ENCODE measurements at regions of chr12 and their contacts with region 1.

Region 1: GRCh38 chr12:66279123-66279712 is 23.1 kb upstream of the HELB start:
- DNase-seq: peak in 8 of 9 experiments; percentile 18 to 73 (median 45)
- ATAC-seq: peak; percentile 70
- H3K4me3 ChIP-seq: no peak overlapping the region
- H3K4me3 Mint-ChIP-seq: peak overlapping the region; percentile 12
- H3K27ac ChIP-seq: no peak overlapping the region
- H3K27ac Mint-ChIP-seq: no peak overlapping the region
- H3K4me1 ChIP-seq: peaks cover 24% of the 10 kb centered on the region
- H3K4me1 Mint-ChIP-seq: peaks cover 47% of the 10 kb centered on the region
- H3K27me3 ChIP-seq: no peaks in the 10 kb centered on the region
- H3K27me3 Mint-ChIP-seq: no peaks in the 10 kb centered on the region
- CTCF ChIP-seq: peak; percentile 63

Region 2: DNA sequence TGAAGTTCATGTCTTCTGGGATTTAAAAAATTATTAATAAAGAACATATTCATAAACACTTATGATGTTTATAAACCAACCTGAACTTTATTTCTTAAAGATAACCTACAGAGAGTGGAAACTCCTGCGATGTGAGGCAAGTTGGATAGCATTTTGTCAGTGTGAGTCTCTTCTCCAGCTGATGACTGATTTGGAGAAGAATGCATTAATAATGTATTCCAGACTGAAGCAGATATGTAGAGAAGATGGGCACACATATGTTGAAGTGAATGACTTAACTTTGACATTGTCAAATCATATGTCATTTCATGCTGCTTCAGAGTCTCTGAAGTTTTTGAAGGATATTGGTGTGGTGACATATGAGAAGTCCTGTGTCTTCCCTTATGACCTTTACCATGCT is 30.4 kb after region 1 on chr12:
- CTCF ChIA-PET with region 1: interaction called, 8 read pairs
- POLR2A ChIA-PET with region 1: interaction called, 3 read pairs
- intact Hi-C with region 1: loop called in 1 of 2 experiments (anchors 5 kb)
- DNase-seq: no peak
- ATAC-seq: no peak
- H3K4me3 ChIP-seq: no peak overlapping the region
- H3K4me3 Mint-ChIP-seq: no peak overlapping the region
- H3K27ac ChIP-seq: no peak overlapping the region
- H3K27ac Mint-ChIP-seq: peak overlapping the region; percentile 38
- H3K4me1 ChIP-seq: peaks cover 62% of the 10 kb centered on the region
- H3K4me1 Mint-ChIP-seq: peaks cover 86% of the 10 kb centered on the region
- H3K27me3 ChIP-seq: no peaks in the 10 kb centered on the region
- H3K27me3 Mint-ChIP-seq: no peaks in the 10 kb centered on the region
- CTCF ChIP-seq: no peak

Region 3: GRCh38 chr12:66319266-66319954 is 40.2 kb after region 1 on chr12:
- CTCF ChIA-PET with region 1: interaction called, 8 read pairs
- POLR2A ChIA-PET with region 1: interaction called, 5 read pairs
- intact Hi-C with region 1: loop called (anchors 2 to 5 kb)
- DNase-seq: no peak
- ATAC-seq: no peak
- H3K4me3 ChIP-seq: no peak overlapping the region
- H3K4me3 Mint-ChIP-seq: no peak overlapping the region
- H3K27ac ChIP-seq: no peak overlapping the region
- H3K27ac Mint-ChIP-seq: peak overlapping the region; percentile 49
- H3K4me1 ChIP-seq: peaks cover 15% of the 10 kb centered on the region
- H3K4me1 Mint-ChIP-seq: peaks cover 69% of the 10 kb centered on the region
- H3K27me3 ChIP-seq: no peaks in the 10 kb centered on the region
- H3K27me3 Mint-ChIP-seq: no peaks in the 10 kb centered on the region
- CTCF ChIP-seq: no peak

Region 4: DNA sequence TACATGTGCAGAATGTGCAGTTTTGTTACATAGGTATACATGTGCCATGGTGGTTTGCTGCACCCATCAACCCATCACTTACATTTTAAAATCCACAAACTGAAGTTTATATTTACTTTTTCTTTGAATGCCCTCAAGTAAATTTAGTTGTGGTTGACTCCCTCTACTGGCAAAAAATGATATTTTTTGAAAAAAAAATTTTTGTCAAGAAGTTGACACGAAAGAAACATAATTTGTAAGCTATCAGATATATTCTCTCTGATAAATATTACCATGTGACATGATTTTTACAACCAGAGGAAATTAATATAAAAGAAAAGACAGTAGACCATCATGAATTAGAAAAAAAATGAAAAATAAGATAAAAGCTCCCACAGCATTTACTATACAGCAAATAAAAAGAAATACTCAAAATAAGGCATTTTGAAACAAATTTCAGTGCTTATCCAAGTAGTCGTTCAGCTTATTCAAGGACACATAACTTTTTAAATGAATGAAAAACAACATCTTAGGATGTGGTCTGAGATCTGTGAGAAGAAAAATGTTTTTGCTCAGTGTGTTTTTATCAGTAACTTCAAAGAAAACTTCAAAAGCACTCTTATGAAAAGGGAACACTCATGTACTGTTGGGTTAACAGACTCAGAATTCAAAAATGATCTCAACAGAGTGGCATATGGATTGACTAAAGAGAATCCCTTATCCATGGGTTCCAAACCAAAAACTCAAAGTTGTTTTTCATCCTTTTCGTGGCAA is 429.7 kb after region 1 on chr12:
- CTCF ChIA-PET with region 1: no interaction called
- POLR2A ChIA-PET with region 1: no interaction called
- intact Hi-C with region 1: loop called in 1 of 2 experiments (anchors 5 kb)
- DNase-seq: peak in 2 of 9 experiments; percentile 26 to 63
- ATAC-seq: peak; percentile 86
- H3K4me3 ChIP-seq: no peak overlapping the region
- H3K4me3 Mint-ChIP-seq: peak overlapping the region; percentile 46
- H3K27ac ChIP-seq: peak overlapping the region; percentile 24 to 41
- H3K27ac Mint-ChIP-seq: peak overlapping the region; percentile 78
- H3K4me1 ChIP-seq: peaks cover 37% of the 10 kb centered on the region
- H3K4me1 Mint-ChIP-seq: peaks cover 48% of the 10 kb centered on the region
- H3K27me3 ChIP-seq: no peaks in the 10 kb centered on the region
- H3K27me3 Mint-ChIP-seq: no peaks in the 10 kb centered on the region
- CTCF ChIP-seq: peak; percentile 76

Measured in CD8-positive, alpha-beta T cell (primary cell).